ENCODE measurements at regions of chr4 and their contacts with region 1.

Region 1: DNA sequence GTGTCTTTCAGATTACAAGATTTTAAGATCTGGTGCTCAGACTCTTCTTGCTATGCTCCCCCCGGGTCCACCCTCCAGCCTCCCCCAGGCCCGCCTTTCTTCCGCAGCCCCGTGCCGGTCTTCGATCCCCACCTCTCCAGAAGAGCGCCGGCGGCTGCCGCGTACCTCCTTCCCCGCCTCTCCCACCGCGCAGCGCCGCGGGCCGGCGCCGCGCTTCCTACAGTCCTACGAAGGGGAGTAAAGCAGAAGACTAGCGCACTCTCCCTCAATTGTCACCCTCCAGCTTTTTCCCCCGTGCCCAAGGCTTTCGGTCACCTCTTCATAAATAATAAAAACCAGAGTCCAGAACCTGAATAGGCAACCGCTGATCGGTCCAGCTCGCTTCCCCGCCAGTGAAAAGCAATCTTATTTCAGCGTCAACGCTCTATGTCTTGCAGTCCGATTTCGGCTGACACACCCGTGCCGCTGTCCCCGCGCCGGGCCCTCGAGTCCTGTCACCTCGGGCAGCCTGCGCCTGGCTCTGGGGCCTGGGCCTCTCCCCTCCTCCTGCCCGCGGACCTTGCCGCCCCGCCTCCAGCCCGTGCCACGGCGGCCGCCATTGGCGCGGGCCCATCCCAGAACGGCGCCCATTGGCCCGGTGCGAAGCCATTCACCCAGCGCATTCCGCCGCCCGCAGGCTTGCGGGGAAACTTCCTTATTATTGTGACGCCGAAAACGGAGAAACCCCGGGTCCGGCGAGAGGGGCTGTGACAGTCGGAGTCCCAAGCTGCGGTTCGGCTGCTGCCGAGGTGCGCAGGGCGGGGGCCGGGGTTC is at the start of gene HERC3:
- DNase-seq: peak; percentile 87
- H3K4me3 ChIP-seq: peak within 1 kb of the TSS; percentile 77 to 90 (median 81)
- H3K27ac ChIP-seq: peak within 1 kb of the TSS; percentile 87
- H3K4me1 ChIP-seq: peaks cover 13% of the 10 kb centered on the region
- H3K27me3 ChIP-seq: no peaks in the 10 kb centered on the region
- CTCF ChIP-seq: no peak
- total RNA-seq, gene HERC3: 14.0 to 36.5 TPM

Region 2: GRCh38 chr4:87819281-87819919 is 772.6 kb before region 1 on chr4:
- CTCF ChIA-PET with region 1: no interaction called
- dilution Hi-C with region 1: no loop called
- in situ Hi-C with region 1: no loop called
- intact Hi-C with region 1: no loop called
- DNase-seq: peak; percentile 90
- H3K4me3 ChIP-seq: no peak overlapping the region
- H3K27ac ChIP-seq: peak overlapping the region; percentile 84
- H3K4me1 ChIP-seq: peaks cover 13% of the 10 kb centered on the region
- H3K27me3 ChIP-seq: no peaks in the 10 kb centered on the region
- CTCF ChIP-seq: no peak

Region 3: DNA sequence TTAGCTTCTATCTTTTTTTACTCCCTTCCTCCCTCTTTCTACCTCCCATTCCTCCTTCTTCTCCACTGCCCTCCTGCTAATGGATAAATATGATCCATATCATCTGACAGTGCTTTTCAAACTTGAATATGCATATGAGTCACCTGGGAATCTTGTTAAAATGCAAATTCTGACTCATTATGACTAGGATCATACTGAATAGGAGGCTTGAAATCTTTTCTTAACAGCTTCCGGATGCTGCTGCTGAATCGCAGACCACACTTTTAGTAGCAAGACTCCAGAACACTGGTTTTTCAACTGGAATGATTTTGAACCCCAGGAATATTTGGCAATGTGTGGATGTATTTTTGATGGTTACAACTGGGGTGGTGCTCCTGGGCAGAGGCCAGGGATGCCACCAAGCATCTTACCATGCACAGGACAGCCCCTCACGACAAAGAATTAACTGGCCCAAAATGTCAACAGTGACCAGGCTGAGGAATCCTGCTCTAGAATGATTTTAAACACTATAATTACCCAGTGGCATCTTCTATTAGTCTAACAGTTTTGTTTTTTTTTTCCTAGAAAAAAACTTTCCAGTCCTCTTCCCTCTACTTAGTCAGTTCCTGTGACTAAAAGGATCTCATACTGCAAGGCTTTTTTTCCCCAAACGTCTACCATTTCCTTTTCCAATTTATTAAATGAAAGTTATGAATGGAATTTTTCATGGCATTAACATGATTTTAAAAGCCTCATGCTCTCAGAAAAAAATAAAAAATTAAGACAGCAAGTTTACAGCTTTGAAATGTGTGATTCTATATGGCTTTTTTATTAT is 57.8 kb before region 1 on chr4:
- CTCF ChIA-PET with region 1: interaction called, 5 read pairs
- dilution Hi-C with region 1: no loop called
- in situ Hi-C with region 1: no loop called
- intact Hi-C with region 1: loop called (anchors 1 kb)
- DNase-seq: peak; percentile 87
- H3K4me3 ChIP-seq: peak overlapping the region in 2 of 3 experiments; percentile 13 to 26
- H3K27ac ChIP-seq: peak overlapping the region; percentile 84
- H3K4me1 ChIP-seq: peaks cover 32% of the 10 kb centered on the region
- H3K27me3 ChIP-seq: no peaks in the 10 kb centered on the region
- CTCF ChIP-seq: no peak

Region 4: GRCh38 chr4:88573995-88574394 is 18.0 kb before region 1 on chr4:
- CTCF ChIA-PET with region 1: no interaction called
- dilution Hi-C with region 1: no loop called
- in situ Hi-C with region 1: no loop called
- intact Hi-C with region 1: no loop called
- DNase-seq: no peak
- H3K4me3 ChIP-seq: no peak overlapping the region
- H3K27ac ChIP-seq: no peak overlapping the region
- H3K4me1 ChIP-seq: peaks cover 3% of the 10 kb centered on the region
- H3K27me3 ChIP-seq: no peaks in the 10 kb centered on the region
- CTCF ChIP-seq: peak in 1 of 2 donors; percentile 8

Region 5: DNA sequence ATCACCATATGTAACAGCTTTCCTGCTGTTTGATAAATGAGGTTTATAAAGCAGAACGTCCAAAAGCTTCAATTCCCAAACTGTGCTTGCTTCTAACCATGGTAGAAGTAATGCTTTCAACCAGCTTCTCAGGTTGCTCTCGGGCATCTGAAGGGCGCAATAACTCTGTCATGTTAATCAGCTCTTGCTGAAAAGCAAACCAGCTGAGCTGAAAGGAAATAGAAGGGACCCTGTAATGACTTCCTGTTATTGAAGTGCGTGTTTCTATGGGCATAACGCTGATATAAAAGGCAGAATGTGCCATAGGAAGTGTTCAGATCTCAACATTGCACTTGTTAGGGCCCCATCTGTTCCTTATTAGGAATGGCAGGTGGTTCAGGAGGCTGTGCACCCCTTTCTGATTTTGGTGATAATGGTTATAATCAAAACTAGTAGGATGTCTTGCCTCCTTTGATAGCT is 21.5 kb after region 1 on chr4:
- CTCF ChIA-PET with region 1: no interaction called
- dilution Hi-C with region 1: no loop called
- in situ Hi-C with region 1: no loop called
- intact Hi-C with region 1: loop called (anchors 1 kb)
- DNase-seq: no peak
- H3K4me3 ChIP-seq: no peak overlapping the region
- H3K27ac ChIP-seq: peak overlapping the region; percentile 97
- H3K4me1 ChIP-seq: peaks cover 70% of the 10 kb centered on the region
- H3K27me3 ChIP-seq: no peaks in the 10 kb centered on the region
- CTCF ChIP-seq: no peak

Region 6: GRCh38 chr4:88623097-88623496 is 31.1 kb after region 1 on chr4:
- CTCF ChIA-PET with region 1: no interaction called
- dilution Hi-C with region 1: no loop called
- in situ Hi-C with region 1: no loop called
- intact Hi-C with region 1: loop called (anchors 2 kb)
- DNase-seq: peak; percentile 98
- H3K4me3 ChIP-seq: no peak overlapping the region
- H3K27ac ChIP-seq: peak overlapping the region; percentile 90
- H3K4me1 ChIP-seq: peaks cover 19% of the 10 kb centered on the region
- H3K27me3 ChIP-seq: no peaks in the 10 kb centered on the region
- CTCF ChIP-seq: no peak

Region 7: GRCh38 chr4:88628759-88629158 is 36.8 kb after region 1 on chr4:
- CTCF ChIA-PET with region 1: no interaction called
- dilution Hi-C with region 1: no loop called
- in situ Hi-C with region 1: no loop called
- intact Hi-C with region 1: loop called (anchors 1 kb)
- DNase-seq: no peak
- H3K4me3 ChIP-seq: no peak overlapping the region
- H3K27ac ChIP-seq: peak overlapping the region; percentile 7
- H3K4me1 ChIP-seq: peaks cover 15% of the 10 kb centered on the region
- H3K27me3 ChIP-seq: no peaks in the 10 kb centered on the region
- CTCF ChIP-seq: no peak

Region 8: GRCh38 chr4:88659055-88659889 is 67.3 kb after region 1 on chr4:
- CTCF ChIA-PET with region 1: interaction called, 7 read pairs
- dilution Hi-C with region 1: no loop called
- in situ Hi-C with region 1: no loop called
- intact Hi-C with region 1: loop called (anchors 1 kb)
- DNase-seq: peak; percentile 82
- H3K4me3 ChIP-seq: no peak overlapping the region
- H3K27ac ChIP-seq: peak overlapping the region; percentile 43
- H3K4me1 ChIP-seq: peaks cover 24% of the 10 kb centered on the region
- H3K27me3 ChIP-seq: no peaks in the 10 kb centered on the region
- CTCF ChIP-seq: peak; percentile 95

Region 9: DNA sequence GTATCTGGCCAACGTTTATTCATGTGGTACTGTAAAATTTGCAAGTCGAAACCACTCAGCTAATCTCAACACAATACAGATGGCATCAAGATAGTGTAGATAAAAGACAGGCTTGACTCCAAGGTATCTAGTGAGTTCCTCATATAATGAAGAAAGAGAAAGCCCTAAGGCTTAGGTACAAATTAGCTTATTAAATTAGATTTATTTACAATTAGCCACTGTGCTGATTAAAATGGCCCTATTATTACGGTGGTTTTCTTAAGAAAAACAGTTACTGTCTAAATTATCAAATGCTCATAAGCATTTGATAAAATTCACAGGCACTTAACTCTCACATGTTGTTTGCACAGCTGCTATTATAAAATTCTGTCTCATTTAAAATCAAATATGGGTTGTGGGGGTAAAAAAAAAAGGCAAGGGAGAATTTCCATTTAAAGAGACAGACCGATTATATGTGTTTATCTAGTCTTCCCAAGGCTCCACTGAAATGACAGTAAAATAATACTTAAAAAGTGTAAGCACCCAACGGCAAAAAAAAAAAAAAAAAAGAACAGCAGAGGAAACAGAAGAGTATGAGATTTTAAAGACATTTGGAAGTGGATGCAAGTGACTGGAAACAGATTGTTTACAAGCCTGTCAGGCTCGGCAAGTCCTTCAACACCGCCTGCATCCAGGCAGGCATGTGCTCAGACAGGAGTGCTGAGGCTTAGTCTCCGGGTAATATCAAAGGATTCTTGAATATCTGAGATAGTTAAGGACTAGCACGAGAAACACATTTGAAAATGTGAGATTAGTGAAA is 409.9 kb after region 1 on chr4:
- CTCF ChIA-PET with region 1: no interaction called
- dilution Hi-C with region 1: no loop called
- in situ Hi-C with region 1: no loop called
- intact Hi-C with region 1: no loop called
- DNase-seq: no peak
- H3K4me3 ChIP-seq: no peak overlapping the region
- H3K27ac ChIP-seq: no peak overlapping the region
- H3K4me1 ChIP-seq: no peaks in the 10 kb centered on the region
- H3K27me3 ChIP-seq: no peaks in the 10 kb centered on the region
- CTCF ChIP-seq: no peak

Measured in mammary epithelial cell (primary cell).